ENCODE measurements at regions of chr3 and their contacts with region 1.

Region 1: GRCh38 chr3:153209596-153209995 is 47.6 kb downstream of the RAP2B start:
- DNase-seq: no peak
- H3K4me3 Mint-ChIP-seq: no peak overlapping the region
- H3K27ac Mint-ChIP-seq: no peak overlapping the region
- H3K4me1 Mint-ChIP-seq: peaks cover 23% of the 10 kb centered on the region
- H3K27me3 Mint-ChIP-seq: no peaks in the 10 kb centered on the region

Region 2: DNA sequence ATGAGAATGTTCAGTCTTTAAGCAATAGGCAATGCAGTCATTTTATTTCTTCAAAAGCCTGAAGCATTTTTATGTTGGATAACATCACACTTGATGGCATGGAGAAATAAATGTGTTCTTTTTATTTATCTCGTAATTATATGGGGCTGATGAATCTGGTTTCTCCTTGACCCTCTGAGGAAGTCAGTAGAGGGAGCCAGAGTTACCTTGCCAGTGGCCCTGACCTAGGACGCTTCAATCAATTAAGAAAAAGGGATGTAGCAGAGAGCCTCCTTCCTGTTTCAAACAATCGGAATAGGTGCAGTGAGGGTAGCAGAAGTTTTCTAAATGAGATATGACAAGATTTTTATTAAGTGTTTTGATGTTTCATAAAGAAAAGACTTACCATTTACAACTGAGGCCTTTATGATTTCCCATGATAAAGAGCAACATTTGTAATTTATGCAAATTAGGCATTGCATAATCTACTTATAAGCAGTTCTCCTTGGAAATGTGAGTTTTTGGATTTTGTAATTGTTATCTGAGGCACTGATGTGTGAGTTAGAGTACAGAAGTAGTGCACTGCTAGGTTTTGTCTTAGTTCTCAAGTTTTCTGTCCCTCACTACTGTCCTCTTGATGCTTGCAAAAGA is 81.6 kb after region 1 on chr3:
- CTCF ChIA-PET with region 1: interaction called, 10 read pairs
- POLR2A ChIA-PET with region 1: interaction called, 3 read pairs
- DNase-seq: no peak
- H3K4me3 Mint-ChIP-seq: no peak overlapping the region
- H3K27ac Mint-ChIP-seq: no peak overlapping the region
- H3K4me1 Mint-ChIP-seq: peaks cover 42% of the 10 kb centered on the region
- H3K27me3 Mint-ChIP-seq: no peaks in the 10 kb centered on the region